ENCODE measurements at regions of chr1 and their contacts with region 1.

Region 1: DNA sequence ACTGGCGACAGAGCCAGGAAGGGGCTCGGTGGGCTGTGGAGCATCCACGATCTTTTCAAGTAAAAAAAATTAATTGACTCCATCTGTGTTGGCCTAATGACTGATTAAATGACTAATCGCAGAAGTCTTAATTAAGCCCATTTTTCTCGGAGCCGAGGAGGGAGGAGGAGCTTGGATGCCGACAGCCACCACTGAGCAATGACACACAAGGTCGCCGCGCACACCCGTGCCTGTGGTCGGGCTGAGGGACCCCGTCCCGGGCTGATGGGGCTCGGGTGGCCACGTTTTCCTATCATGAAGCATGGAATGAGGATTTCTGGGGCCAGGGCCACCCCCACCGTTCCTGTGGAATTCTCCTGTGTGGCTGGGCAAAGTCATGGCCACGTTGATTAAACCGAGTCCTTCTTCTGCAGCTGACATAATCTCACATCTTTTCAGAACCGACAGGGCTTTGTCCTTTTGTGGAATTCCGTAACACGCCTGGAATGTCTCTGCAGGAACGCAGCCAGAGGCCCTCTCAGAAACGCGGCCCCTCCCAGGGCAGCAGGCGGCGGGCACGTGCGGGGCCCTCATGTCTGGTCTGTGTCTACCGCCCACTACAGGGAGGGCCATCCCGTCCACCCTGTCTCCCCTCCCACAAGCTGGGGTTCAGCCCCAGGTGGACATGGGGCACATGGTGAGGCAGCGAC is 60.7 kb downstream of the MORN1 start:
- DNase-seq: peak in 1 of 2 experiments; percentile 44
- H3K4me3 ChIP-seq: no peak overlapping the region
- H3K27ac ChIP-seq: no peak overlapping the region
- H3K4me1 ChIP-seq: no peaks in the 10 kb centered on the region
- H3K27me3 ChIP-seq: peaks cover 11% of the 10 kb centered on the region
- CTCF ChIP-seq: no peak

Region 2: DNA sequence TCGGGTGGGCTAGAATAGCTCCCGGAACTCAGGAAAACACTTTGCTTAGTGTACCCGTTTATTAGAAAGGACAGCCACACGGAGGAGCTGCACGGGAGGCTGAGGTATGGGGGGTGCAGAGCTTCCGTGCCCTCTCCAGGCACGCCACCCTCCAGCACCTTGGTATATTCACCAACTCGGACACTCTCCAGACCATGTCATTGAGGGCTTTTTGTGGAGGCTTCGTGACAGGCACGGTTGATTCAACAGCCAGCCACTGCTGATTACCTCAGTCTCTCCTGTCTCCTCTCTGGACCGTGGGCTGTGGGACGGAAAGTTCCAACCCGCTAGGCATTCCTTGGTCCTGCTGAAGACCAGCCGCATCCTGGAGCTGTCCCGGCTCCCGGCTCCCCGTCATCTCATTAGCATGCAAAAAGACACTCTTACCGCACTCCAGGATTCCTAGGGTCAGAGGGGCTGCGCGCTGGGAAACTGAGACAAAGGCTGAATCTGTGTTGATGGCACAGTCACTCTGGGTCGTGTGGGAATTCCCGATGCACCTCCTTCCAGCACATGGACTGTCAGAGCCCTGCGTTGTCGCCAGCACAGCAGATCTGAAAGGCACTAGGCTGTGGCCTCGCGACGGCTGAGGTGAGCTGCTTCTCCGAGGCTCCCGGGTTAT is 214.8 kb before region 1 on chr1:
- CTCF ChIA-PET with region 1: no interaction called
- POLR2A ChIA-PET with region 1: no interaction called
- intact Hi-C with region 1: no loop called
- DNase-seq: no peak
- H3K4me3 ChIP-seq: no peak overlapping the region
- H3K27ac ChIP-seq: no peak overlapping the region
- H3K4me1 ChIP-seq: no peaks in the 10 kb centered on the region
- H3K27me3 ChIP-seq: no peaks in the 10 kb centered on the region
- CTCF ChIP-seq: no peak

Region 3: GRCh38 chr1:2141036-2141435 is 189.6 kb before region 1 on chr1:
- CTCF ChIA-PET with region 1: interaction called, 14 read pairs
- POLR2A ChIA-PET with region 1: no interaction called
- intact Hi-C with region 1: no loop called
- DNase-seq: no peak
- H3K4me3 ChIP-seq: no peak overlapping the region
- H3K27ac ChIP-seq: no peak overlapping the region
- H3K4me1 ChIP-seq: peaks cover 10% of the 10 kb centered on the region
- H3K27me3 ChIP-seq: no peaks in the 10 kb centered on the region
- CTCF ChIP-seq: no peak

Region 4: GRCh38 chr1:2205191-2205952 is 125.3 kb before region 1 on chr1:
- CTCF ChIA-PET with region 1: no interaction called
- POLR2A ChIA-PET with region 1: interaction called, 21 read pairs
- intact Hi-C with region 1: no loop called
- DNase-seq: peak; percentile 56 to 90
- H3K4me3 ChIP-seq: peak overlapping the region; percentile 60
- H3K27ac ChIP-seq: no peak overlapping the region
- H3K4me1 ChIP-seq: peaks cover 40% of the 10 kb centered on the region
- H3K27me3 ChIP-seq: no peaks in the 10 kb centered on the region
- CTCF ChIP-seq: no peak

Measured in PC-9 (cell line).